ENCODE measurements at regions of chr7 and their contacts with region 1.

Region 1: DNA sequence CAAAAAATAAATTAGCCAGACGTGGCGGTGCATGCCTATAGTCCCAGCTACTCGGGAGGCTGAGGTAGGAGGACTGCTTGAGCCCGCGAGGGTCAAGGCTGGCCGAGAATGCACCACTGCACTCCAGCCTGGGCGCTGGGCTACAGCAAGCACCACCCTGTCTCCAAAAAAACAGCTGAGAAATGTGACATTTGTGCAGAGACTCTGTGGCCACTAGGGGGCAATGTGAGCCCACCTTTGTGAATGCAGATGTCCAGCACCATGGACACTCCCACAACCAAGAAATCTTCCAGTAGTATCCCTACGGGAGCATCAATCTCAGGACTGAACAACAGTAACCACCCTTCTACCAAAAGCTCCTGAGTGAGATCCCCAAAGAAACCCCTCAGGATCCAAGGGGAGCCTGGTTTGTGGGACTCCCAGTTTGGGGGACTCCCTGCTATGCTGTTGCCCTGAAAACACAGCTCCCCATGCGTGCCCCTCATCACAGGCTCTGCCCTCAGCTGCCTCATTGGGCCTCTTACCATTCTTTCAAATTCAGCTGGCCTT is 6.2 kb upstream of the AHCYL2 start:
- DNase-seq: peak; percentile 91
- H3K4me3 Mint-ChIP-seq: no peak overlapping the region
- H3K27ac Mint-ChIP-seq: no peak overlapping the region
- H3K4me1 Mint-ChIP-seq: no peaks in the 10 kb centered on the region
- H3K27me3 Mint-ChIP-seq: no peaks in the 10 kb centered on the region
- CTCF ChIP-seq: peak; percentile 85

Region 2: GRCh38 chr7:128814499-128814898 is 404.1 kb before region 1 on chr7:
- CTCF ChIA-PET with region 1: no interaction called
- POLR2A ChIA-PET with region 1: no interaction called
- intact Hi-C with region 1: no loop called
- DNase-seq: no peak
- H3K4me3 Mint-ChIP-seq: no peak overlapping the region
- H3K27ac Mint-ChIP-seq: no peak overlapping the region
- H3K4me1 Mint-ChIP-seq: peaks cover 6% of the 10 kb centered on the region
- H3K27me3 Mint-ChIP-seq: peaks cover 45% of the 10 kb centered on the region
- CTCF ChIP-seq: no peak

Region 3: GRCh38 chr7:129238546-129238945 is 20.0 kb after region 1 on chr7:
- CTCF ChIA-PET with region 1: interaction called, 10 read pairs
- POLR2A ChIA-PET with region 1: no interaction called
- intact Hi-C with region 1: no loop called
- DNase-seq: no peak
- H3K4me3 Mint-ChIP-seq: no peak overlapping the region
- H3K27ac Mint-ChIP-seq: no peak overlapping the region
- H3K4me1 Mint-ChIP-seq: no peaks in the 10 kb centered on the region
- H3K27me3 Mint-ChIP-seq: no peaks in the 10 kb centered on the region
- CTCF ChIP-seq: no peak

Region 4: GRCh38 chr7:129298268-129298893 is 79.8 kb after region 1 on chr7:
- CTCF ChIA-PET with region 1: interaction called, 176 read pairs
- POLR2A ChIA-PET with region 1: interaction called, 17 read pairs
- intact Hi-C with region 1: loop called (anchors 1 kb)
- DNase-seq: peak; percentile 64
- H3K4me3 Mint-ChIP-seq: no peak overlapping the region
- H3K27ac Mint-ChIP-seq: no peak overlapping the region
- H3K4me1 Mint-ChIP-seq: peaks cover 6% of the 10 kb centered on the region
- H3K27me3 Mint-ChIP-seq: no peaks in the 10 kb centered on the region
- CTCF ChIP-seq: peak; percentile 67

Region 5: GRCh38 chr7:129359638-129360037 is 141.1 kb after region 1 on chr7:
- CTCF ChIA-PET with region 1: interaction called, 15 read pairs
- POLR2A ChIA-PET with region 1: no interaction called
- intact Hi-C with region 1: no loop called
- DNase-seq: no peak
- H3K4me3 Mint-ChIP-seq: no peak overlapping the region
- H3K27ac Mint-ChIP-seq: no peak overlapping the region
- H3K4me1 Mint-ChIP-seq: no peaks in the 10 kb centered on the region
- H3K27me3 Mint-ChIP-seq: no peaks in the 10 kb centered on the region
- CTCF ChIP-seq: no peak

Region 6: GRCh38 chr7:129468087-129468486 is 249.5 kb after region 1 on chr7:
- CTCF ChIA-PET with region 1: interaction called, 74 read pairs
- POLR2A ChIA-PET with region 1: no interaction called
- intact Hi-C with region 1: loop called (anchors 1 kb)
- DNase-seq: no peak
- H3K4me3 Mint-ChIP-seq: no peak overlapping the region
- H3K27ac Mint-ChIP-seq: no peak overlapping the region
- H3K4me1 Mint-ChIP-seq: no peaks in the 10 kb centered on the region
- H3K27me3 Mint-ChIP-seq: no peaks in the 10 kb centered on the region
- CTCF ChIP-seq: no peak